IMR-90 (cell line): ENCODE measurements at regions of chr14 and their contacts with region 1.

Region 1: DNA sequence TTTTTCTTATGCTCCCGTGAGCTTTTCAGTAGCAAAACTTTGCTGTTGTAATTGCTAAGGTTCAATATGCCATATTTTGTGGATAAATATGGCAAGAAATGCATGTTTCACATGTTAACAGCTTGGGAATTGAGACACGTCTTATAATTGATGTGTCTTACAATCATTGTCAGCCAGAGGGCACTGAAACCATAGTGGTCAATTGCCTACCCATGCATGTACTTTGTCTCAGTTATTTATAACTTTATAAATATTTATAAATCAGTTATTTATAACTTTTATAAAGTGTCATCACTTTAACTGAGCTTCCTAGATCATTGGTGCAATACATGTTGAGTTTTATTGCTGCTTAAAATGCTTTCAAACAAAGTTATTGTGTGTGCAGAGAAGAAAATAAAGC is 82.0 kb downstream of the CATSPERB start:
- DNase-seq: peak; percentile 49
- ATAC-seq: peak; percentile 82
- H3K4me3 ChIP-seq: no peak overlapping the region
- H3K27ac ChIP-seq: no peak overlapping the region
- H3K4me1 ChIP-seq: no peaks in the 10 kb centered on the region
- H3K27me3 ChIP-seq: no peaks in the 10 kb centered on the region; the same call in 1 of the 2 replicates
- CTCF ChIP-seq: peak; percentile 50
- POLR2A ChIP-seq: no peak
- RAD21 ChIP-seq: peak; percentile 70

Region 2: DNA sequence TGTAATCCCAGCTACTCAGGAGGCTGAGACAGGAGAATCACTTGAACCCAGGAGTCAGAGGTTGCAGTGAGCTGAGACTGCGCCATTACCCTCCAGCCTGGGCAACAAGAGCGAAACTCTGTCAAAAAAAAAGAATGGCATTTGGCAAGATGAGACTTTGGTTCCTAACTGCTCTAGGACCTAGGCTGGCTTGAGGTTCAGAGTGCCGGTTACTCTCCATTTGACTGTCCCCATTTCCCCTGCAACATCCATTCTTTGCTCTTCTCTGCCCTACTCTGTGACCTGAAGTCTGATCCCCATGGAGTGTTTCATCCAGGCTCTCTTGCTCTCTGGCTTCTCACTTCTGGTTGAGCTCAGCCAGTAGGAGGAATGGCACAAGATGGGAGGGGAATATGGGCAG is 113.6 kb before region 1 on chr14:
- CTCF ChIA-PET with region 1: no interaction called
- POLR2A ChIA-PET with region 1: no interaction called
- dilution Hi-C with region 1: no loop called
- in situ Hi-C with region 1: no loop called
- intact Hi-C with region 1: no loop called
- DNase-seq: no peak
- ATAC-seq: no peak
- H3K4me3 ChIP-seq: no peak overlapping the region
- H3K27ac ChIP-seq: no peak overlapping the region
- H3K4me1 ChIP-seq: no peaks in the 10 kb centered on the region
- H3K27me3 ChIP-seq: no peaks in the 10 kb centered on the region
- CTCF ChIP-seq: no peak
- POLR2A ChIP-seq: no peak
- RAD21 ChIP-seq: no peak

Region 3: DNA sequence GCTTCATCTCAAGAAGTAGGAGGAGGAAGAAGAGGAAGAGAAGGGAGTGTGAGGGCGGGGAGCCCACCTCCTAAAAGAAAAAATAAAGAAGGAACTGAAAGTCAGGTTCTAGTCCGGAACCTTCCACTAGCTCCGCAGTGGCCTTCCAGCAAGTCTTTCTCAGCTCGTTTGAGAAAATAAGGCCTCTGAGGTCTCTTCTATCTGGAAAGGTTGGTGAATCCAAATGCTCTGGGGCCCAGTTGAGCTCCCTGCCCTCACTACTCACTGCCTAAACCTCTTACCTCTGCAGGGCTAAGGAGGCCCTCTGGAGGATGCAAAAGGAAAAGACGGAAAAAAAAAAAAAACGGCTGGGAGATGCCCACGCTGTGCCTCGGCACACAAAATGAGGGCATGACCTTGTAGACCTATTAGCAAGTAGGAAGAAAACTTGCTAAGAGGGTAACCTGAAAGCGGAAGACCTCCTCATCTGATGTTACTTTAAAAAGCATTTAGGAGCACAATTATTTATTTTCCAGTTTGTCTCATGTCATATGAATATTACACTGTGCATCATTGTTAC is 261.6 kb after region 1 on chr14:
- CTCF ChIA-PET with region 1: interaction called, 4 read pairs
- POLR2A ChIA-PET with region 1: no interaction called
- dilution Hi-C with region 1: no loop called
- in situ Hi-C with region 1: no loop called
- intact Hi-C with region 1: loop called (anchors 5 kb)
- DNase-seq: peak; percentile 33
- ATAC-seq: peak; percentile 63; the same call in 1 of the 2 replicates
- H3K4me3 ChIP-seq: no peak overlapping the region
- H3K27ac ChIP-seq: no peak overlapping the region
- H3K4me1 ChIP-seq: no peaks in the 10 kb centered on the region
- H3K27me3 ChIP-seq: no peaks in the 10 kb centered on the region
- CTCF ChIP-seq: peak; percentile 43
- POLR2A ChIP-seq: no peak
- RAD21 ChIP-seq: peak; percentile 52

Region 4: DNA sequence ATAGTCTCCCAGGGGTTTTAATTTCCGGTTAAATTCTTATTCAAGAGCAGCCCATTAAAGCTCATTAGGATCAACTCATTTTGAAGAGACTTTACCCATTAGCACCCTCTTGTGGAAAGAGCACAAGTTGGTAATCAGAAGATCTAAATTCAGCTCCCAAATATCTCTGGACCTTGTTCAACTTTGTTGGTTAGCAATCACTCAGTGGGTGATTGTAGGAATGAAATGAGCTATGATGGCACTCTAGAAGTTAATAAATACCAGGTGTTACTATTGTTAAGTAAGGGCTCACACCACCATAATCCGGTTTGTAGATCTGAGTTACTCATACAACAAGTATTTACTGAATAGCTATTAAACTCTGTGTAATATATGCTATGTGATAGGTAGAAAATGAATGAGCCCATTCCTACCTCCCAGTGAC is 347.0 kb after region 1 on chr14:
- CTCF ChIA-PET with region 1: interaction called, 10 read pairs
- POLR2A ChIA-PET with region 1: no interaction called
- dilution Hi-C with region 1: no loop called
- in situ Hi-C with region 1: loop called (anchors 5 kb)
- intact Hi-C with region 1: loop called (anchors 5 kb)
- DNase-seq: peak; percentile 72
- ATAC-seq: peak; percentile 75
- H3K4me3 ChIP-seq: no peak overlapping the region
- H3K27ac ChIP-seq: no peak overlapping the region
- H3K4me1 ChIP-seq: no peaks in the 10 kb centered on the region
- H3K27me3 ChIP-seq: no peaks in the 10 kb centered on the region
- CTCF ChIP-seq: peak; percentile 66
- POLR2A ChIP-seq: no peak
- RAD21 ChIP-seq: peak; percentile 65